Activated CD8-positive, alpha-beta T cell treated with anti-CD3 and anti-CD28 coated beads, Interleukin-2, amount 10 ng/mL, durations not matched to agents 7 days and 5 days (primary cell): ENCODE measurements at regions of chr19 and their contacts with region 1.

Region 1: GRCh38 chr19:38245826-38246498 is 10.2 kb downstream of the PPP1R14A start:
- DNase-seq: no peak
- ATAC-seq: no peak
- H3K4me3 Mint-ChIP-seq: no peak overlapping the region
- H3K27ac Mint-ChIP-seq: no peak overlapping the region
- H3K4me1 Mint-ChIP-seq: peaks cover 2% of the 10 kb centered on the region
- H3K27me3 Mint-ChIP-seq: no peaks in the 10 kb centered on the region

Region 2: DNA sequence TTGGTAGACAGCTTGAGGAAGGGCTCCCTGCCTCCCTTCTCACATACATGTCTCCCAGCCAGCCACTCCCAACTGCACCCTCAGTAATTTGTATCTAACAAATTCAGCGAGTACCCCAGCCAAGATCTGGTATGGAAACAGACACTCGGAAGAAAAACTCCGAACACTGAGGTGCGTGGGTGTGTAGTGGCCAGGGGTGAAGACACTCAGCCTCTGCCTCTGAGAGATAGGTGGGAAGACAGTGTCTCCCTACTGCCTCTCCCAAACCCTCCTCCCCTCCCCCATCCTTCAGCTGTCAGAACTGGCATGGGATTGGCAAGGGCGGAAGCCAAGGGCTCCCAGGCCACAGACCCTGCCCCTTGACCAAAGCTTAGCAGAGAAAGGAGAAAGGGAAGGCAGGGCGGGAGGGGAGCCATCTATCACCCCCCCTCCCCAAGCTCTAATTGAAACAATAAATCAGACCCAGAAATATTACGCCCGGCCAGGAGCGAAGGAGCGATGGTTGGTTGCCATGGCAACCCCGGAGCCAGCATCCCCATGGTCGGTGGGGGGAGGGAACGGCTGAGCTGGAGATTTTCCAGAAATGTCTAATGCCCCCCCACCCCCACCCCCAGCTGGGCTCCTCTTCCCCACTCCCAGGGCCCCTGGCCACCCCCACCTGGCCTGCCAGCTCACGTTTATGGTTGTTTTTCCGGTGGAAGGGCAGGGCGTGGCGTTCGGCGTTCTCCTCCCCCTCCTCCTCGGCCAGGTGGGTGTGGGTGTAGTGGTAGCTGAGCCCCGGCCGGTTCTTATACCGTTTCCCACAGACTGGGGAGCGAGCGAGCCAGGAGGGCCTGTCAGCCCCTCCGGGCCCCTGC is 28.9 kb before region 1 on chr19:
- CTCF ChIA-PET with region 1: no interaction called
- POLR2A ChIA-PET with region 1: no interaction called
- DNase-seq: no peak
- ATAC-seq: no peak
- H3K4me3 Mint-ChIP-seq: no peak overlapping the region
- H3K27ac Mint-ChIP-seq: no peak overlapping the region
- H3K4me1 Mint-ChIP-seq: peaks cover 13% of the 10 kb centered on the region
- H3K27me3 Mint-ChIP-seq: peaks cover 28% of the 10 kb centered on the region

Region 3: GRCh38 chr19:38233740-38234251 is 12.2 kb before region 1 on chr19:
- CTCF ChIA-PET with region 1: interaction called, 10 read pairs
- POLR2A ChIA-PET with region 1: no interaction called
- DNase-seq: peak; percentile 86
- ATAC-seq: peak; percentile 62
- H3K4me3 Mint-ChIP-seq: no peak overlapping the region
- H3K27ac Mint-ChIP-seq: no peak overlapping the region
- H3K4me1 Mint-ChIP-seq: peaks cover 8% of the 10 kb centered on the region
- H3K27me3 Mint-ChIP-seq: peaks cover 22% of the 10 kb centered on the region

Region 4: GRCh38 chr19:38263689-38264485 is 17.9 kb after region 1 on chr19:
- CTCF ChIA-PET with region 1: interaction called, 18 read pairs
- POLR2A ChIA-PET with region 1: interaction called, 5 read pairs
- DNase-seq: peak; percentile 74
- ATAC-seq: peak; percentile 87
- H3K4me3 Mint-ChIP-seq: peak overlapping the region; percentile 74
- H3K27ac Mint-ChIP-seq: peak overlapping the region; percentile 86
- H3K4me1 Mint-ChIP-seq: peaks cover 26% of the 10 kb centered on the region
- H3K27me3 Mint-ChIP-seq: no peaks in the 10 kb centered on the region

Region 5: GRCh38 chr19:38346837-38347236 is 100.9 kb after region 1 on chr19:
- CTCF ChIA-PET with region 1: no interaction called
- POLR2A ChIA-PET with region 1: no interaction called
- DNase-seq: no peak
- ATAC-seq: no peak
- H3K4me3 Mint-ChIP-seq: no peak overlapping the region
- H3K27ac Mint-ChIP-seq: no peak overlapping the region
- H3K4me1 Mint-ChIP-seq: no peaks in the 10 kb centered on the region
- H3K27me3 Mint-ChIP-seq: no peaks in the 10 kb centered on the region

Region 6: DNA sequence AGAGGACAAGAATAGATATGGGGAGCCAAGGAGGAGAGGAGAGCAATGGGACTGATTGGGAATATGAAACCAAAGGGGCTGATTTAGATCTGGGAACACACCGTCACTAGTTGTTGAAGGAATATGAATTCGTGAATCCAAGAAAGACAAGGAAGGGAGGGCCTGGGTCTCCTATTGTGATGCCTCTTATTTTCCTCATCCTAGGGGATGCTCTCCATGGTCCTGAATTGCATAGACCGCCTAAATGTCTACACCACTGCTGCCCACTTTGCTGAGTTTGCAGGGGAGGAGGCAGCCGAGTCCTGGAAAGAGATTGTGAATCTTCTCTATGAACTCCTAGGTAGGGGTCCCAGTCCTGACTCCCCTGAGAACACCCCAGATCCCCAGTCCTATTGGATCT is 209.1 kb after region 1 on chr19:
- CTCF ChIA-PET with region 1: no interaction called
- POLR2A ChIA-PET with region 1: no interaction called
- DNase-seq: peak; percentile 40
- ATAC-seq: no peak
- H3K4me3 Mint-ChIP-seq: no peak overlapping the region
- H3K27ac Mint-ChIP-seq: no peak overlapping the region
- H3K4me1 Mint-ChIP-seq: no peaks in the 10 kb centered on the region
- H3K27me3 Mint-ChIP-seq: peaks cover 1% of the 10 kb centered on the region